Activated CD4-positive, alpha-beta memory T cell treated with anti-CD3 and anti-CD28 coated beads for 36 hours (primary cell): ENCODE measurements at regions of chr2 and their contacts with region 1.

Region 1: DNA sequence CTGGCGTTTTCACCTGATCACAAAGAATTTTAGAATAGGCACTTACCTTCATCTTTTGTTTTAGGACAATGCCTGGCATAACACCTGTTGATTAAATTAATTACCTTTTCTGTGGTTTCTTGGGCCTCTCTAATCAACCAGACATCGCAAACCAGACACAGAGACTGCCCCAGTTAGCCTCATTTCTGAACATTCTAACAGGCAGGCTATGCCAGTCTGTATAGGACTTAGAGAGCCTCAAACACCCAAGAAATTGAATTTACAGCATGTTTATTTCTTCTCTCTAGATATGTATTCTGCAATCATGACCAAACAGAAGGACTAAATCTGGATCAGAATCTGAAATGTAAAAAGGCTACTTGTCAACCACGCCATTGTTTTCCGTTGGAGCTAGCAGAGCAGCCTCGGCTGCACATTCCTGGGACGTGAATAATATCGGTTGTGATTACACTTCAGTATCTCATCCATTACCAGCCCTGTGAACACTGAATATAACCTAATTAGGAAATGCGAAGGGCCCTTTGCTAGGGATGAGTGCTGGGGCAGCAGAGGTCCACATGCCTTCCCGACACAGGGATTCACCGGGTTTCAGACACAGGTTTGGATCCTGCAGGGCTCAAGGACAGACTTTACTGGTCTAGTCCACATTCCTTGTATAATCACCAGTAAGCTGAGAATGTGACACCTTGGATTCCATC is 17.5 kb upstream of the CDC42EP3 start:
- DNase-seq: no peak
- H3K4me3 Mint-ChIP-seq: no peak overlapping the region
- H3K27ac Mint-ChIP-seq: no peak overlapping the region
- H3K4me1 Mint-ChIP-seq: peaks cover 23% of the 10 kb centered on the region
- H3K27me3 Mint-ChIP-seq: no peaks in the 10 kb centered on the region

Region 2: DNA sequence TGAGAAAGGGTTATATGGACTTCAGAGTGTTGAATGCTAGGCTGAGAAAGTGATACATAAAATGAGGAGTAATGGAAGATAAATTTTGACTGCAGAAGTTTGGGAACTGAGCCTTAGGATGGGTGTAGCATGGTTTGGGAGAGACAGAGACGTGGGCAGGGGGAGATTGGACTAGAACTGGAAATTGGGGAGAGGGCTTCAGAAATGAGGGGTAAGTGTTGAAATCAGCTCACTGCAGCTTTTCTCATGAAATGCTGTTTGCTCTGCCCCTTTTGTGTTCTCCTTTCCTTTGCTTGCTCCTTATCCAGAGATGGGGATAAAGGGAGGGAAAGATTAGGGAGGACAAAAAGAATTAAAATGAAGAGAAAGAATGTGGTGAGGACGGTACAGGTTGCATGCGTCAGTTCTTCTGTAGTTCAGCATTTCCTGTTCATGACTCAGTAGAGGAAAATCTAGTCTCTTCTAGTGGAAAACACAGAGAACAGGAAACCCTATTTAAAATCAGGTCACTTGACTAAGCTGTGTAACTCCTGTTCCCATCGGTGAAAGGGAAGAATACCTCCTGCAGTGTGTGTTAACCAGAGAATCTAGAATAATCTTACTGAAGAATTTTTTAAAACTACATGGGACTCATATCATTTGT is 1227.8 kb before region 1 on chr2:
- CTCF ChIA-PET with region 1: no interaction called
- POLR2A ChIA-PET with region 1: no interaction called
- intact Hi-C with region 1: loop called (anchors 10 kb)
- DNase-seq: no peak
- H3K4me3 Mint-ChIP-seq: no peak overlapping the region
- H3K27ac Mint-ChIP-seq: no peak overlapping the region
- H3K4me1 Mint-ChIP-seq: no peaks in the 10 kb centered on the region
- H3K27me3 Mint-ChIP-seq: no peaks in the 10 kb centered on the region

Region 3: GRCh38 chr2:37623971-37624900 is 64.7 kb before region 1 on chr2:
- CTCF ChIA-PET with region 1: no interaction called
- POLR2A ChIA-PET with region 1: no interaction called
- intact Hi-C with region 1: loop called (anchors 2 kb)
- DNase-seq: peak; percentile 50
- H3K4me3 Mint-ChIP-seq: peak overlapping the region; percentile 45
- H3K27ac Mint-ChIP-seq: peak overlapping the region; percentile 83
- H3K4me1 Mint-ChIP-seq: peaks cover 80% of the 10 kb centered on the region
- H3K27me3 Mint-ChIP-seq: no peaks in the 10 kb centered on the region

Region 4: DNA sequence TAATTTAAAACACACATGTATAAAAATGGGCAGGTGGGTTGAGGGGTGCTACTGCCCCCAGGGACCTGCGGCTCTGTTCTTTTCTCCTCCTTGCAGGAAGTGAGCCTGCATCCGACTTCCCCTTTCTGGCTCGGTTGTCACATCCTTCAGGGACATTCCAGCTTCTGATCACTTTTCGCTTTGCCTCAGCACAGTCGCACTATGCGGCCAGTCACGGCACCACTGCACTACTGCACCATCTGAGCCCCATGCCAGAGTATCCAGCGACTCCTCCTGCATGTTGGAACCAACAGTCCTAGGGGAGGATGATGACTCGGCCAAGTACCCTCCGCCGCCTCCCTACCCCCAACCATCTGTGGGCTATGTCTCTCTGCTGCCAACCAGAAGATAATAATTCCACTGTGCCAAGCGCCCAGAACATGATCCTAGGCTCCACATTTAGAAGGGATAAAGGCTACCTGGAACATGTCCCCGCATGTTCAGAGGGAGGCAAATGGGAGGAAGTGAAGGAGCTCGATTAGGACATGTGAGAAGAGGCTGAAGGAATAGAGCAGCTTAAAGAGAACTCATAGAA is 35.0 kb before region 1 on chr2:
- CTCF ChIA-PET with region 1: interaction called, 3 read pairs
- POLR2A ChIA-PET with region 1: no interaction called
- intact Hi-C with region 1: loop called (anchors 2 kb)
- DNase-seq: peak; percentile 63
- H3K4me3 Mint-ChIP-seq: peak overlapping the region; percentile 28
- H3K27ac Mint-ChIP-seq: peak overlapping the region; percentile 83
- H3K4me1 Mint-ChIP-seq: peaks cover 94% of the 10 kb centered on the region
- H3K27me3 Mint-ChIP-seq: no peaks in the 10 kb centered on the region

Region 5: GRCh38 chr2:37871456-37872191 is 182.7 kb after region 1 on chr2:
- CTCF ChIA-PET with region 1: interaction called, 4 read pairs
- POLR2A ChIA-PET with region 1: no interaction called
- intact Hi-C with region 1: loop called (anchors 5 kb)
- DNase-seq: no peak
- H3K4me3 Mint-ChIP-seq: peak overlapping the region; percentile 38
- H3K27ac Mint-ChIP-seq: peak overlapping the region; percentile 93
- H3K4me1 Mint-ChIP-seq: peaks cover 27% of the 10 kb centered on the region
- H3K27me3 Mint-ChIP-seq: no peaks in the 10 kb centered on the region